PC-9 (cell line): ENCODE measurements at regions of chr5 and their contacts with region 1.

Region 1: DNA sequence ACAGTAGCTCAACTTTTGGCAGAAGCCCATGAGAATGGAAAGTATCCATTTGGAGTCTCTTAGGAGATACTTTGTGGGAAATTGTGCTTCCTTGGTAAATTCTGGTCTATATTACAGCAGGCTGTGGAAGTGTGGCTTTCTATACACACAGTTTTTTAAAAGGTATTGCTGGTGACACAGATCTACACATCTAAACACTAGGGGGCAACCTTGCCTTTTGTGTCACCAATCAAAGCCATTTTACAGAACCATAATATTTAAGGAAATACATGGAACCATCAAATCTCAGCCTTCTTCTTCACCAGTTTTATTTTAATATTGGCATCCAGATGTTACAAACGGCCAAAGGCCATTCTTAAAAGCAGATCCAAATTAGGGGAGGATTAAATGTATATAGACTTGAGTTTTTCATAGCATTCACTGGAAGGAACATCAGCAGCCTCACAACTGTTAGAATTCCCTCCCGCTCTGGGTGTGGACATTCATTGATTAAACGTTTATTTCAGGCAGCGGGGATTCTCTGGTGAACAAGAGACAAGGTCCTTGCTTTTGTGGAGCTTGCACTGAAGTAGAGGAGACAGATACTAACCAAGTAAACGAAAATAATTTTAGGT is 132.4 kb upstream of the EPB41L4A start:
- DNase-seq: peak in 1 of 2 experiments; percentile 20
- H3K4me3 ChIP-seq: no peak overlapping the region
- H3K27ac ChIP-seq: no peak overlapping the region
- H3K4me1 ChIP-seq: no peaks in the 10 kb centered on the region
- H3K27me3 ChIP-seq: no peaks in the 10 kb centered on the region
- CTCF ChIP-seq: peak; percentile 79

Region 2: GRCh38 chr5:112657804-112658203 is 106.3 kb after region 1 on chr5:
- CTCF ChIA-PET with region 1: interaction called, 16 read pairs
- POLR2A ChIA-PET with region 1: no interaction called
- intact Hi-C with region 1: no loop called
- DNase-seq: no peak
- H3K4me3 ChIP-seq: no peak overlapping the region
- H3K27ac ChIP-seq: no peak overlapping the region
- H3K4me1 ChIP-seq: no peaks in the 10 kb centered on the region
- H3K27me3 ChIP-seq: no peaks in the 10 kb centered on the region
- CTCF ChIP-seq: no peak

Region 3: DNA sequence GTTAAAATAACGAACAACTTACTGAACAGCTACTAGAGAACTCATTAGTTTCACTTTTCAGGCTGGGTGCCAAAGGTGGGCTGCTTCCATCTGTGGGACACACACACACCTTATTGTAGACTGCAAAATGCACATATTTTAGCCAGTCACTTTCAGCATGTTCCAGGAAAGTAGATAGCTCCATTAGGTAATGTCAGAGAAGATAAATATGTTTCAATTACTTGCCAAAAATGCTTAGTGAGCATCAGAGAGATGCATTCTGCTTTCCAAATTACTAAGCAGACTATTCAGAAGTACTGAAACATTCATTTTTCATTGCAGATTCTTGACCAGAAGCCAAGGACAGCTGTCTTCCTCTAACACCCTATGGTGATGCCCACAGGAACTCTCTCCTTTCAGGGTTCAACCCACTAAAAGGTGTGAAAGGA is 130.0 kb after region 1 on chr5:
- CTCF ChIA-PET with region 1: no interaction called
- POLR2A ChIA-PET with region 1: no interaction called
- intact Hi-C with region 1: no loop called
- DNase-seq: no peak
- H3K4me3 ChIP-seq: no peak overlapping the region
- H3K27ac ChIP-seq: no peak overlapping the region
- H3K4me1 ChIP-seq: no peaks in the 10 kb centered on the region
- H3K27me3 ChIP-seq: no peaks in the 10 kb centered on the region
- CTCF ChIP-seq: no peak

Region 4: GRCh38 chr5:112848116-112848811 is 296.7 kb after region 1 on chr5:
- CTCF ChIA-PET with region 1: no interaction called
- POLR2A ChIA-PET with region 1: no interaction called
- intact Hi-C with region 1: loop called (anchors 10 kb)
- DNase-seq: peak in 1 of 2 experiments; percentile 40
- H3K4me3 ChIP-seq: no peak overlapping the region
- H3K27ac ChIP-seq: no peak overlapping the region
- H3K4me1 ChIP-seq: no peaks in the 10 kb centered on the region
- H3K27me3 ChIP-seq: no peaks in the 10 kb centered on the region
- CTCF ChIP-seq: peak; percentile 70

Region 5: DNA sequence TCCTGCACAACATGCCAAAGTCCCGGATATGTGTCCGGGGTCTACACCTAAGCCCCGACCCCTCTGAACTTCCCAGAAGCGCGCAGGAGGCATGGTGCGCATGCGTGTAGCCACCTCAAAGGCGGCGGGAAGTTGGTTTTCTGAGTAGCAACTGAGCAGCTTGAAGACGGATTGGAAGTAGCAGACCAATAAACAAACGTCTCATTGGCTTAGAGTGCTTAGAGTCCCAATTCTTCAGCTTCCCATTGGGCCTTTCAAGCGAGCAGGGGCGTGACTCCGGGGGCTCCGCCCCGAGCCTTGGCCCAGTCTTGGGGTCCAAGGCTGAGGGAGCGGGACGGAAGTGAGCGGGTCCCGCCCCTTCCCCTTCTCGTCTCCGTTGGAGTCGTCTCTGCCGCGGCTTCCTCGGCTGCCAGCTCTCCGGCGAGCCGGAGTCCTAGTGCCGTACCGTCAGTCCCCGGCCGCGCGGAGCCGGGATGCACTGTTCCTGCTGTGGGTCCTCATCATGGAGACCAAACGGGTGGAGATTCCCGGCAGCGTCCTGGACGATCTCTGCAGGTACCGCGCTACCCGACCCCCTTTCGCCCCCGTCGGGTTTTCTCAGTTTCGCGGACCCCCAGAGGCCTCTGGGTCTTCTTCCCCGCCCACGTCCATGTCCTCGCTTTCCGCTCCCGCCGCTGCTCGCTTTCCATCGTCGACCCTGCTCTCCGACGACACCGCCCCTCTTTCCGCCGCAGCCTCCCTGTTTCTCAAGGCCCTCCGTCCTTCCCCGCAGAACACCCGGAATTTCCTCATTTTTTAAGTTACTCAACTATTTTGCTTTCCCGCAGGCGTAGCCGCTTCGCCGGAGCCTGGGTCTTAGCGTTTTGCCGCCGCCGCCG is 425.1 kb after region 1 on chr5 and contains the start of gene DCP2:
- CTCF ChIA-PET with region 1: no interaction called
- POLR2A ChIA-PET with region 1: no interaction called
- intact Hi-C with region 1: loop called (anchors 10 kb)
- DNase-seq: peak; percentile 94 to 96
- H3K4me3 ChIP-seq: peak within 1 kb of the TSS; percentile 70
- H3K27ac ChIP-seq: peak within 1 kb of the TSS; percentile 63
- H3K4me1 ChIP-seq: peaks cover 33% of the 10 kb centered on the region
- H3K27me3 ChIP-seq: no peaks in the 10 kb centered on the region
- CTCF ChIP-seq: no peak
- total RNA-seq, gene DCP2: 40.0 and 45.6 TPM in 2 replicates